Naive thymus-derived CD8-positive, alpha-beta T cell (primary cell): ENCODE measurements at regions of chr13 and their contacts with region 1.

Region 1: GRCh38 chr13:48233046-48233907 is at the start of gene ITM2B:
- DNase-seq: peak; percentile 48 to 78 (median 73)
- ATAC-seq: peak; percentile 71 to 72
- H3K4me3 Mint-ChIP-seq: peak within 1 kb of the TSS; percentile 84 to 99 (median 96)
- H3K27ac Mint-ChIP-seq: peak within 1 kb of the TSS; percentile 97 to 99 (median 99)
- H3K4me1 Mint-ChIP-seq: peaks cover 28 to 67% (median 54%) of the 10 kb centered on the region in 4 donors
- H3K27me3 Mint-ChIP-seq: no peaks in the 10 kb centered on the region
- polyA plus RNA-seq, gene ITM2B: 1,063 to 1,292 (median 1,234) TPM

Region 2: DNA sequence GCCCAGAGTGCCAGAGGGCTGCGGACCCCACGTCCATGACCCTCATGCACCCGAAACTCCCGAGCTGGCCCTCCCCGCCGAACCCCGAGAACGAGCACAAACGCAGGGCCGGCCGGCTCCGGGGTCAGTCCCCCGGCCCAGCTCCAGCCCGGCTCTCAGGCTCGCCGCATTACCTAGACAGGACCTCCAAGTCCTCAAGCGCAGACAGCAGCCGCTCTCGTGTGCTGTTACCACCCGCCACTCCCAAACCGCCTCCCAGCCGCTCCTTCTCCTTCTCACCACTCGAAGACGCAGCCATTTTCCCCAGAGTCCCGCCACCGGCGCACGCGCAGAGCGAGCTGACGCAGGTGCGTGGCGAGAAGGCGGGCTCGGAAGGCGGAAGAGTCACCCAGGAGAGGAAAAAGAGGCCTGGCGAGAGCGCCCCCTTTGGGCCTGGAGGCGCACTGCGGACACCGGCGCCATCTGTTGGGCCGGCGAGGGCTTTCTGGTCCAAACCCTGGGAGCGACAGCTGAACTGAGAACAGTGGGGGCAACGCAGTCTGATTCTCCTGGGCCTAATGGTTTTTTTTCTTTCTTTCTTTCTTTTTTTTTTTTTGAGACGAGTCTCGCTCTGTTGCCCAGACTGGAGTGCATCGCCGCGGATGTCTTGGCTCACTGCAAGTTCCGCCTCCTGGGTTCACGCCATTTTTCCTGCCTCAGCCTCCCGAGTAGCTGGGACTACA is 138.3 kb before region 1 on chr13 and contains the start of gene MED4:
- POLR2A ChIA-PET with region 1: interaction called, 11 read pairs
- DNase-seq: peak; percentile 93 to 99 (median 98)
- ATAC-seq: peak; percentile 92 to 93
- H3K4me3 Mint-ChIP-seq: peak within 1 kb of the TSS; percentile 89 to 99 (median 96)
- H3K27ac Mint-ChIP-seq: peak within 1 kb of the TSS; percentile 92 to 99 (median 98)
- H3K4me1 Mint-ChIP-seq: peaks cover 16 to 49% (median 40%) of the 10 kb centered on the region in 4 donors
- H3K27me3 Mint-ChIP-seq: no peaks in the 10 kb centered on the region
- polyA plus RNA-seq, gene MED4: 88.9 to 91.9 (median 90.1) TPM

Region 3: DNA sequence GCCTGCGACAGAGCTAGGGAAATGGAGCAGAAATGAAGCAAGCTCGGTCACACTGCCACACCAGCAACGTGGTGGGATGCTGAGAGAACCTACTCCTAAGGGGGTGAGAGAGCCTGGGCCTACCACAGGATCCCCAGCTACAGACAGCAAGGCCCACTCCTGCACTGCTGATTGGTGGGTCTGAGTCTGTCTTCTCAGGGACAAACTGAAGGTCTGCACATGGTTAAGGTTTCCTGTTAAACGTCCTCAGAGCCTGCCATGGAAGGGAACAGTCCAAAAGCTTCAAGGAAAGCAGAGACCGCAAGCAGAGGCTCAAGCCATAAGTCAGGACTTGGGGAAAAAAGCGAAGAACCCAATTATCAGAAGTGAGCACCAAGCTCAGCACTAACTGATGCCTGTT is 84.8 kb before region 1 on chr13:
- POLR2A ChIA-PET with region 1: interaction called, 85 read pairs
- DNase-seq: no peak
- ATAC-seq: no peak
- H3K4me3 Mint-ChIP-seq: peak overlapping the region in 5 of 10 donors; percentile 29 to 44 (median 34)
- H3K27ac Mint-ChIP-seq: peak overlapping the region; percentile 67 to 91 (median 84)
- H3K4me1 Mint-ChIP-seq: peaks cover 37 to 74% (median 64%) of the 10 kb centered on the region in 4 donors
- H3K27me3 Mint-ChIP-seq: no peaks in the 10 kb centered on the region

Region 4: GRCh38 chr13:48184260-48184659 is 49.0 kb before region 1 on chr13:
- POLR2A ChIA-PET with region 1: interaction called, 83 read pairs
- DNase-seq: no peak
- ATAC-seq: no peak
- H3K4me3 Mint-ChIP-seq: peak overlapping the region; percentile 6 to 76 (median 62)
- H3K27ac Mint-ChIP-seq: peak overlapping the region; percentile 78 to 99 (median 94)
- H3K4me1 Mint-ChIP-seq: peaks cover 31 to 74% (median 64%) of the 10 kb centered on the region in 4 donors
- H3K27me3 Mint-ChIP-seq: no peaks in the 10 kb centered on the region

Region 5: GRCh38 chr13:48199499-48199898 is 33.8 kb before region 1 on chr13:
- POLR2A ChIA-PET with region 1: interaction called, 27 read pairs
- DNase-seq: no peak
- ATAC-seq: peak; percentile 47 to 62
- H3K4me3 Mint-ChIP-seq: peak overlapping the region in 4 of 10 donors; percentile 3 to 43 (median 27)
- H3K27ac Mint-ChIP-seq: peak overlapping the region; percentile 13 to 84 (median 73)
- H3K4me1 Mint-ChIP-seq: peaks cover 20 to 35% (median 27%) of the 10 kb centered on the region in 4 donors
- H3K27me3 Mint-ChIP-seq: no peaks in the 10 kb centered on the region